ENCODE measurements at regions of chr1 and their contacts with region 1.

Region 1: GRCh38 chr1:10032590-10033358 is at the start of gene UBE4B:
- DNase-seq: peak; percentile 96 to 99 (median 97)
- H3K4me3 ChIP-seq: peak within 1 kb of the TSS; percentile 66 to 100 (median 97)
- H3K27ac ChIP-seq: peak within 1 kb of the TSS; percentile 78 to 99 (median 98)
- H3K27me3 ChIP-seq: no peaks in the 10 kb centered on the region
- CTCF ChIP-seq: peak; percentile 64 to 97 (median 86)
- total RNA-seq, gene UBE4B: 59.0 to 105 (median 78.4) TPM

Region 2: DNA sequence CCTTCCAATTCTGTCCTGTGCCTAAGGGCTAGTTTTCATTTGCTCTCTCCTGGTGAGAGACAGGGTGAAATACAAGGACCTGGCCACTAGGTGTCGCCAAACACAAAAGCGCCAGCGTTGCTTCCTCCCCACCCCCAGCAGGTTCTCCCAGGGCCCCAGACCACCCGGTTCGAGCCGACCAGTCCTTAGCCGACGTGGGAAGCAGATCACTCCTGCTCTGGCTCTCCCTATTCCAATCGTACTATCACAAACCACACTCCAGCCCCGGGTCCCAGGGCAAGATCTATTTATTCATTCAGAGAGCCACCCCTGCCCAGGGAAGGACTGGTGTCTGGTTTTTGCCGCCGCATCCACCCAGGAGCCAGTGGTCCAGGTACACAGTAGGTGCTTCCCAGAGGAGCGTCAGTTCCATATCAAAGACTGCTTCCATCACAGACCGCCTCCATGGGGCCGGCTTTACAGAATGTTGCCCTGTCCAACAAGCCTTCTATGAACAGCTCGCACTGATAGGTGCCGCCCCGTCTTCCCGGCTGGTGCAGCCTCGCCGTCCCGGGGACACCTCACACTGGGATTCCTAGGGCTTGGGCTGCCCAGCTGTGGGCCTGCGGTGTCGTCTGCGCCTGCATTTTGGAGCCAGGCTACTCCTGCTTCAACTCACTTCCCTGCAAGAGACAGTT is 157.7 kb before region 1 on chr1:
- intact Hi-C with region 1: loop called (anchors 1 to 5 kb)
- DNase-seq: peak in 9 of 10 donors; percentile 55 to 82 (median 74)
- H3K4me3 ChIP-seq: peak overlapping the region in 49 of 59 donors; percentile 0 to 54 (median 40)
- H3K27ac ChIP-seq: peak overlapping the region in 53 of 59 donors; percentile 17 to 88 (median 64)
- H3K27me3 ChIP-seq: no peaks in the 10 kb centered on the region
- CTCF ChIP-seq: peak; percentile 71 to 98 (median 94)

Region 3: GRCh38 chr1:9914610-9914937 is 118.2 kb before region 1 on chr1:
- intact Hi-C with region 1: no loop called
- DNase-seq: no peak
- H3K4me3 ChIP-seq: no peak overlapping the region
- H3K27ac ChIP-seq: peak overlapping the region in 1 of 59 donors; percentile 20
- H3K27me3 ChIP-seq: no peaks in the 10 kb centered on the region
- CTCF ChIP-seq: peak in 10 of 56 donors; percentile 0 to 49 (median 18)

Region 4: GRCh38 chr1:9990944-9991343 is 41.8 kb before region 1 on chr1:
- intact Hi-C with region 1: loop called in 1 of 2 experiments (anchors 5 kb)
- DNase-seq: no peak
- H3K4me3 ChIP-seq: no peak overlapping the region
- H3K27ac ChIP-seq: peak overlapping the region in 4 of 59 donors; percentile 17 to 44 (median 34)
- H3K27me3 ChIP-seq: no peaks in the 10 kb centered on the region
- CTCF ChIP-seq: no peak

Region 5: GRCh38 chr1:10001016-10001665 is 31.6 kb before region 1 on chr1:
- intact Hi-C with region 1: no loop called
- DNase-seq: peak in 7 of 10 donors; percentile 26 to 76 (median 61)
- H3K4me3 ChIP-seq: peak overlapping the region in 1 of 59 donors; percentile 16
- H3K27ac ChIP-seq: peak overlapping the region in 58 of 59 donors; percentile 24 to 93 (median 80)
- H3K27me3 ChIP-seq: peaks cover 0 to 33% (median 14%) of the 10 kb centered on the region in 45 donors
- CTCF ChIP-seq: peak in 2 of 56 donors; percentile 6 to 13

Region 6: DNA sequence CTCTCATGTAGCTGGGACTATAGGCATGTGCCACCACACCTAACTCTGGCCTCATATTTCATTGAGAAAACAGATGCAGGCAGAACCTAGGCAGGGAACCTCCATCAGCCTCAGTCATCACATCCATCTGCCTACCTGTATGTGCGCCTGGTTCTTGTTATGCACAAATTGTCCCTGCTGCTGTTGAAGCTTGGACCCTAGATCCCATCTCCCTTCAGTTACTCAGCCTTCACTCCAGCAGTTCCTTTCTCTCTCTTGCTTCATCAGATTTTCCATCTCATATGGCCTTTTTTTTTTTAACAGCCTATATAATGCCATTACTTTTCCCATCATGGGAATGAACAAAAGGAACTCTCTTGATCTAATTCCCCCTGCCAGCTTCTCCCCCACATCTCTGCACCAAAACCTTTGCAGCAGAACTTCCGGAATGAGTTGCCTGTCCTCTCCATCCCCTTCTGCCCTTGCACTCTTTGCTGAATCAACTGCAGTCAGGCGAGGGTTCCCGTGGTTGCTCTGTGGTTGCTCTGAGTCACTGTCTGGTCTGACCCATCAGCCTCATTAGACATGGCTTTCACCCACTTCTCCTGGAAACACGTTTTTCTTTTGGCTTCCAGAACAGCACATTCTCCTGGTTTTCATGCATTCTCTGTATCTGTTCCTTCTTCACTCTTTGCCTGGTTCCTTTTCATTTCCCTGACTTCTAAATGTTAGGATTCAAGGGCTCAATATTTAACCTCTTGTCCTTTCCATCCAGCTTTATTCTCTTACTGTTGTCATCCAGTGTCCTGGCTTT is 41.5 kb after region 1 on chr1:
- intact Hi-C with region 1: loop called in 1 of 2 experiments (anchors 5 kb)
- DNase-seq: peak in 7 of 10 donors; percentile 41 to 89 (median 70)
- H3K4me3 ChIP-seq: no peak overlapping the region
- H3K27ac ChIP-seq: peak overlapping the region in 58 of 59 donors; percentile 53 to 97 (median 87)
- H3K27me3 ChIP-seq: no peaks in the 10 kb centered on the region
- CTCF ChIP-seq: no peak

Region 7: DNA sequence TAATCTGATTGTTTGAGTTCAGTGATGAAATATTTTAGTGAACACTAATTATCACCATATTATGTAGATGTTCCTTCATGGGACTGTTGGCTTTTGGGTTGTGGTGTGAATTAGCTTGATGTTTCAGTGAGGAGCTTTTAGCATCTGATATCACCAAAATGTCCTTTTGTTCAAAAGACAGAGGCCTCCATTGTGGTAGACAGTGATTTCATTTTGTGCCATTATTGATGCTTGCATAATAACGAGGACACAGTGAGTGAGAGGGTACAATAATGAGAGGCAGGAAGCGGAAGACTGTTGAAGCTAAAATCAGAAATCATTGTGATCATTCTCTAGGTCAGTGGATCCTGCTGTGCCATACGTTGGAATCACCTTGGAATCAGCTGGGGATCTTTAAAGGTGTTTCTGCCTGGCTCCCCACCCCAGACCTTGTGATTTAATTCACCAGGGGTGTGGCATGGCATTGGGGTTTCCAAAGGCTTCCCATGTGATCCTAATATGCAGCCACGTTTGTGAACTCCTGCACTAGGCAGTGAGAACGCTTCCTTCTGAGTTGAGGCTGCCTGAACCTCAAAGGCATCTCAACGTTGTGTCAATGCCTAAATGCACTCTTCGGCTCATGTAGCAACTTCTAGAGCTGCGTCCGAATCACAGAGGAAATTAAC is 95.5 kb after region 1 on chr1:
- intact Hi-C with region 1: loop called in 1 of 2 experiments (anchors 5 kb)
- DNase-seq: peak in 2 of 10 donors; percentile 40 to 53
- H3K4me3 ChIP-seq: peak overlapping the region in 5 of 59 donors; percentile 1 to 39 (median 3)
- H3K27ac ChIP-seq: peak overlapping the region; percentile 31 to 99 (median 94)
- H3K27me3 ChIP-seq: no peaks in the 10 kb centered on the region
- CTCF ChIP-seq: peak in 3 of 56 donors; percentile 7 to 18 (median 11)